Dorsolateral prefrontal cortex (tissue), 120 donors: ENCODE measurements at regions of chr9 and their contacts with region 1.

Region 1: DNA sequence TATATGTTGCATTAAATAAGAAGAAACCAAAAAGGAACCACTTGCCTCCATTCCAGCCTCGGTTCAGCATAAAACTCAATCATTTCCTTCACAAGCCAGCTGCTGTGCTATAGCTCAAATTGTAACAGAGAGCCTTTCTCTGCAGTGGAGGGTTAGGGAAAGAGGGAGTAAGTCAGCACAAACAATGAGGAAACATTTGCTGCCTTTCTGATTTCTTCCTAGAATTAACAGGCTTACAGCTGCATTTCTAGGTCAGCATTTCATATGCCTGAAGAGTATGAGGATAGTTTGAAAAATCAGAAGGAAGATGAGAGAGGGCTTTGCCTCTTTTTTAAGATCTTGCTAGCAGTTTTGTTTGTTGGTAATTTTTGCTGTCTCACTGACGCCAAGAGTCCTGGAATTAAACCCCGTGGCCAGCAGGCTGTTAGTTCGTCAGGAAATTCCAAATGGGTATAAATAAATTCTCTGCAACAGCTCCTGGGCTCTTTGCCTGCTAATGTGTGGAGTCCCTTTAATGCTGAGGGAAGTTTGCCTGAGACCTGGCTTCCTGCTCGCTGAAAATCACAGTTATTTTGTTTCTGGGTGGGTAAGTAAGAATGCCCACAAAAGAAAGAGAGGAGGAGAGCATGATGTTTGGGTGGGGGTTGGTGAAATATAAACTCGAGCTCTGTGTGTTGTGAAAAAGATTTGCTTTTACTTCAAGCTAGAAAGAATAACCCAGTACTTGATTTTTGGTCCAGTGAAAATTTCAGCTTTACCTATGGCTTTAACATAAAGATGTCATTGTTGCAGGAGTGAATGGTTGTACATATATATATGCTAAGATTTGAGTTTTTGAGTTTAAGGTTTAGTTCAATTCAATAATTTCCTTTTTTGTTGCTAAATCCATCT is 148.1 kb upstream of the DMRT1 start:
- DNase-seq: peak in 2 of 10 donors; percentile 58 to 74
- H3K4me3 ChIP-seq: peak overlapping the region; percentile 12 to 74 (median 50)
- H3K27ac ChIP-seq: peak overlapping the region; percentile 84 to 99 (median 97)
- H3K27me3 ChIP-seq: no peaks in the 10 kb centered on the region
- CTCF ChIP-seq: peak in 21 of 56 donors; percentile 5 to 33 (median 18)

Region 2: DNA sequence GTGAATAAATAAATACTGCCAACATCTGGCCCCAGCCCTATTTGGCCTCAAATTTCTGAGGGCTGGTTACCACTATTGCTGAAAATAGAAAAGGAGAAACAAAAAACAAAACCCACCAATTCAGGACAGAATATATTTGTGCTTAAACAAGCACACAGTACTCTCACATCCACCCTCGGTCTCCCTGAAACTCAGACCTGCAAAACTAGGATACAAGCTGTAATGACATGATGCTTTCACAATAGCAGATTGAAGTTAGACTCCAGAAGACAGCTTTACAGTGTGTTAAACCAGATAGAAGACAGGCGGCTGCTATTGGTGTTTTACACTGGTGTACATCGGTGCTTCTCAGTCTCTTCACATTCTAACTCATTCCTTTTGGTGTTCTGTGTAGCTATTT is 66.8 kb before region 1 on chr9:
- intact Hi-C with region 1: loop called in 1 of 2 experiments (anchors 10 kb)
- DNase-seq: no peak
- H3K4me3 ChIP-seq: peak overlapping the region in 34 of 59 donors; percentile 0 to 43 (median 22)
- H3K27ac ChIP-seq: peak overlapping the region in 49 of 59 donors; percentile 4 to 80 (median 57)
- H3K27me3 ChIP-seq: no peaks in the 10 kb centered on the region
- CTCF ChIP-seq: no peak

Region 3: DNA sequence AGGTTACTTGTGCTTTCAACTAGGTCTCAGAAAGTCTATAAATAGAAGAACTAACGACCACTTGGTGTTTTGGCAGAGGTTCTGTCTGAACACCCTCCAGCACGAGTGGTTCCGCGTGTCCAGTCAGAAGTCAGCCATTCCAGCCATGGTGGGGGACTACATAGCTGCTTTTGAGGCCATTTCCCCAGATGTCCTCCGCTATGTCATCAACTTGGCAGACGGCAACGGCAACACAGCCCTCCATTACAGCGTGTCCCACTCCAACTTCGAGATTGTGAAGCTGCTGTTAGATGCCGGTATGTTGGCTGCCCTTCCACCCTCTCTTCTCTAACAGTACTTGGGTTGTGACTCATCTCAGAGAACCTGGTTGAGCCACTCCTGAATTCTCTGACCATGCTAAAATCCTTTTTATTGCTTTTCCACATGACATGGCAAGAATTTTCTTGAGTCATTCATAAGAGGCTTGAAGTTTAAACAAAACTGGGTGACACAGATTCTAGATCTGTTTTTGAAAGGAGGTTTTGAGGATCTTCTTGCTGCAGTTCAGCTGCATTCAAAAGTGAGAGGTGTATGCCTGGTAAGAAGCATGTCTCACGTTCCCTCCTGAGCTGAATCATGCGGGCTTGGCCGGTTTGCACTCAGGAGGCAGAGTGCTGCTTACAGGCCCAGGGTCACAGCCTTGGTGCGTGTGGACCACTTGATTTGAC is 44.9 kb after region 1 on chr9:
- intact Hi-C with region 1: loop called in 1 of 2 experiments (anchors 5 kb)
- DNase-seq: peak in 3 of 10 donors; percentile 50 to 60 (median 53)
- H3K4me3 ChIP-seq: no peak overlapping the region
- H3K27ac ChIP-seq: peak overlapping the region in 55 of 59 donors; percentile 9 to 96 (median 69)
- H3K27me3 ChIP-seq: no peaks in the 10 kb centered on the region
- CTCF ChIP-seq: no peak

Region 4: DNA sequence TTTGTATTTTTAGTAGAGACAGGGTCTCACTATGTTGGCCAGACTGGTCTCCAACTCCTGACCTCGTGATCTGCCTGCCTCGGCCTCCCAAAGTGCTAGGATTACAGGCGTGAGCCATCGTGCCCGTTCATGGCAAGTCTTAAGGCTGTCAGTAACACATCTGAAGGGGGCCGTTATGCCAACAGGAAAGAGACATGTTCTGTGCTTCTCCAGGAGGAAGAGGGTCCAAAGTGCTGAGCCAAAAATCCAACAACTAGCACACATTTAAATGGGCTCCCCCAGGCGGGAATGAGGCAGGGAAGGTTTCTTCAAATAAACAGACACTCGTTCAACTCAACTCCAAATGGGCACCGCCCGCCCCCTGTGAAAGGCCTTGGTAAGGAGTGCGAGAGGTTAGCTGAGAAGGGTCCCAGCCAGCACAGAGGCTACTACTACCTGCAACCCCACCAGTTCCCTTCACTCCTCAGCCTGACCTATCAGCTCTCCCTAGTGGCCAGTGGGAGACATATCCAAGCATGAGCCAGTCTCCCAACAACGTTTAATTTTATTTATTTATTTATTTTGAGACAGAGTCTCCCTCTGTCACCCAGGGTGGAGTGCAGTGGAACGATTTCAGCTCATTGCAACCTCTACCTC is 63.9 kb after region 1 on chr9:
- intact Hi-C with region 1: loop called in 1 of 2 experiments (anchors 5 kb)
- DNase-seq: peak in 2 of 10 donors; percentile 33 to 58
- H3K4me3 ChIP-seq: no peak overlapping the region
- H3K27ac ChIP-seq: no peak overlapping the region
- H3K27me3 ChIP-seq: no peaks in the 10 kb centered on the region
- CTCF ChIP-seq: peak in 55 of 56 donors; percentile 38 to 79 (median 62)

Region 5: GRCh38 chr9:784202-784601 is 90.8 kb after region 1 on chr9:
- intact Hi-C with region 1: no loop called
- DNase-seq: no peak
- H3K4me3 ChIP-seq: no peak overlapping the region
- H3K27ac ChIP-seq: no peak overlapping the region
- H3K27me3 ChIP-seq: no peaks in the 10 kb centered on the region
- CTCF ChIP-seq: no peak